PC-9 (cell line): ENCODE measurements at regions of chr12 and their contacts with region 1.

Region 1: GRCh38 chr12:111221062-111222026 is 147.6 kb downstream of the PHETA1 start:
- DNase-seq: no peak
- H3K4me3 ChIP-seq: no peak overlapping the region
- H3K27ac ChIP-seq: no peak overlapping the region
- H3K4me1 ChIP-seq: no peaks in the 10 kb centered on the region
- H3K27me3 ChIP-seq: peaks cover 95% of the 10 kb centered on the region
- CTCF ChIP-seq: no peak

Region 2: GRCh38 chr12:111160350-111161241 is 60.7 kb before region 1 on chr12:
- CTCF ChIA-PET with region 1: interaction called, 10 read pairs
- POLR2A ChIA-PET with region 1: no interaction called
- intact Hi-C with region 1: no loop called
- DNase-seq: no peak
- H3K4me3 ChIP-seq: no peak overlapping the region
- H3K27ac ChIP-seq: no peak overlapping the region
- H3K4me1 ChIP-seq: no peaks in the 10 kb centered on the region
- H3K27me3 ChIP-seq: peaks cover 92% of the 10 kb centered on the region
- CTCF ChIP-seq: no peak

Region 3: GRCh38 chr12:111812881-111813741 is 591.8 kb after region 1 on chr12:
- CTCF ChIA-PET with region 1: interaction called, 14 read pairs
- POLR2A ChIA-PET with region 1: no interaction called
- intact Hi-C with region 1: no loop called
- DNase-seq: peak; percentile 59 to 69
- H3K4me3 ChIP-seq: no peak overlapping the region
- H3K27ac ChIP-seq: no peak overlapping the region
- H3K4me1 ChIP-seq: no peaks in the 10 kb centered on the region
- H3K27me3 ChIP-seq: peaks cover 4% of the 10 kb centered on the region; the same call in 1 of the 2 replicates
- CTCF ChIP-seq: peak; percentile 84